Cardiac septum (tissue), 1 donor: ENCODE measurements at regions of chr5 and their contacts with region 1.

Region 1: DNA sequence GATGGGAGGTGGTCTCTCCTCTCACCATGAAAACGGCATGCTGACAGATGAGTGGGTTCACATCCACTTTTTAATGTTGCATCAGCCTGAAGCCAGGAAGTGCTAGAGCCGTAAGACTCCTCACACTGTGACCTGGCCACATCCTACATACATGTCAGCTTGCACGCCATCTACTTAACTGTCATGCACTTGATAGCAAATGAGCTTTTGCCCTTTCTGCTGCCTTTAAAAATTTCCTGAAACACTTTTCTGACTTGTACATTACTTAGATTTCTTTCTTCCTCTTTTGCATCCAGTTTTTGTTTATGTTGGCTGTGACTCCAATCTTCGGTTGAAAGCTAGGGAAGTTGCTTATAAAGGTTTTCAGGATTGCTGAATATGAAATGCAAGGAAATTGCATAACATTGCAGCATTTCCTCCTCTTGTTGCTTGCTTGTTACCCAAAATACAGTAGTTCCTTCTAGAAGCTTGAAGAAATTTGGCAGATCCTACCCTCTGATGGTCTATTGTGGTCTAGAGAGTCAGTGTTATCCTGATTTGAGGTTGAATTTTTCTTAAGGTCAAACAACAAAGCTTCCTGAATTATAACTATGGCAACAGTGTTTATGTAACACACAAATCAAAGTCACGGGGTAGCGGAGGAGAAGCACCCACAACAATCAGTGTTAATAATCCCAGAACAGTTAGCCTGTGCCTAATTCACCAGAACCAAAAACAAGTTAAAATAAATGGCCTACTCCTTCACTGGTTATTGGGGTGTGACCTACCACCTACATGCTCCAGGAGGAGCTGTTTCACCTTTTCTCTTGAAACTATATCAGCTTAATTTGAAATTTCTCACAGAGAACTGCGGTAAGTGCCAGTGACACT is 232.5 kb downstream of the ARHGAP26 start:
- DNase-seq: no peak

Region 2: GRCh38 chr5:143063175-143063970 is 60.7 kb after region 1 on chr5:
- intact Hi-C with region 1: loop called (anchors 5 kb)
- DNase-seq: no peak